Gastrocnemius medialis (tissue), 4 donors: ENCODE measurements at regions of chr9 and their contacts with region 1.

Region 1: DNA sequence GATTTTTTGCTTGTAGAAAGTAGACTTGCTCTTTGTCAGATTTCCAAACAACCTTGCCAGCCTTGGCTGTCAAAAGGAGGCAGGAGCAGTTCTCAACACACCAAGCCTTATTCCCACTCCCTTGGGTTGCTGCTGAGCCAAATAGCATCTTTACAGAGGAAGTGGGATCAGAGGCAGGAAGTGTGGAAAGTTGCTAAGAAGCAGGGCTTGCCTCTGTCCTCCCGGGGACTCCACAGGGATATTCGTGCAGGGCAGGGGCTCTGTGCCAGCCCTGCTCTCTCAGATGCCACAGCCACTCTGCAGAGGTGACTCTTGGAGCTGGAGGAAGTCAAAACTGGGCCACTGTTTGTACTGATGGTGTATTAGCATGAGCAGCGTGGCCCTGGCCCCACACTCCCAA is 24.3 kb downstream of the PTPDC1 start:
- DNase-seq: peak in 1 of 2 donors; percentile 49
- ATAC-seq: peak; percentile 56 to 72
- H3K4me3 ChIP-seq: no peak overlapping the region
- H3K27ac ChIP-seq: peak overlapping the region; percentile 29 to 62 (median 40)
- H3K4me1 ChIP-seq: peaks cover 17 to 21% of the 10 kb centered on the region in 2 donors
- H3K27me3 ChIP-seq: no peaks in the 10 kb centered on the region
- CTCF ChIP-seq: no peak
- POLR2A ChIP-seq: no peak

Region 2: GRCh38 chr9:93003552-93004407 is 1104.8 kb before region 1 on chr9:
- in situ Hi-C with region 1: no loop called
- intact Hi-C with region 1: no loop called
- DNase-seq: peak in 1 of 2 donors; percentile 32
- ATAC-seq: peak in 1 of 2 donors; percentile 36
- H3K4me3 ChIP-seq: peak overlapping the region in 1 of 4 donors; percentile 9
- H3K27ac ChIP-seq: no peak overlapping the region
- H3K4me1 ChIP-seq: no peaks in the 10 kb centered on the region
- H3K27me3 ChIP-seq: no peaks in the 10 kb centered on the region
- CTCF ChIP-seq: peak; percentile 20 to 65 (median 56)
- POLR2A ChIP-seq: no peak

Region 3: GRCh38 chr9:94002316-94003140 is 106.1 kb before region 1 on chr9:
- in situ Hi-C with region 1: loop called in 1 of 4 experiments (anchors 25 kb)
- intact Hi-C with region 1: no loop called
- DNase-seq: no peak
- ATAC-seq: no peak
- H3K4me3 ChIP-seq: no peak overlapping the region
- H3K27ac ChIP-seq: no peak overlapping the region
- H3K4me1 ChIP-seq: no peaks in the 10 kb centered on the region
- H3K27me3 ChIP-seq: no peaks in the 10 kb centered on the region
- CTCF ChIP-seq: peak in 1 of 5 experiments; percentile 26
- POLR2A ChIP-seq: no peak